CD8-positive, alpha-beta T cell (primary cell): ENCODE measurements at regions of chr10 and their contacts with region 1.

Region 1: DNA sequence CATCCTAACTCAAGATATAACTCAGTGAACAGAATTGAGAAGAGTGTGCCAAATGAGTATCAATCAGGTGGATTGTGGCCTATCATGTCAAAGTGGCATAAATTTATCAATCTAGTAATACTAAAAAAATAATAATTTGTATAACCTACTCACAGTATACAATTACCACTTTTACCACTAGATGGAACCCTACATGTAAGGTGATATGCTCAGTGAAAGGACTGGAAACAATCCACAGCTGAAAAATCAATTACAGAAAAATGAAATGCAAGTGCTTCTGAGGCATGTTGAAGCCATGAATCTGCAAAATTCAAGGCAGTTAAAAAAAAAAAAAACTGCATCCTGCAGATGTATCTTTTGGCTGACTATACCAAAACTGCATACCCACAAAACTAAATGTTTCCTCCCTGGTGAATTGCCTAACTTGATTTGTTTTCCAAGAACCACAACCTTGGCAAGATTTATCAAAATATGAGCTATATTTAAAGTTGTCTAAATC is 13.9 kb downstream of the ARHGAP19 start:
- DNase-seq: peak in 2 of 9 experiments; percentile 61 to 74
- ATAC-seq: peak; percentile 84
- H3K4me3 ChIP-seq: no peak overlapping the region
- H3K4me3 Mint-ChIP-seq: no peak overlapping the region
- H3K27ac ChIP-seq: no peak overlapping the region
- H3K27ac Mint-ChIP-seq: no peak overlapping the region
- H3K4me1 ChIP-seq: no peaks in the 10 kb centered on the region
- H3K4me1 Mint-ChIP-seq: peaks cover 5% of the 10 kb centered on the region
- H3K27me3 ChIP-seq: no peaks in the 10 kb centered on the region
- H3K27me3 Mint-ChIP-seq: no peaks in the 10 kb centered on the region
- CTCF ChIP-seq: peak; percentile 82

Region 2: DNA sequence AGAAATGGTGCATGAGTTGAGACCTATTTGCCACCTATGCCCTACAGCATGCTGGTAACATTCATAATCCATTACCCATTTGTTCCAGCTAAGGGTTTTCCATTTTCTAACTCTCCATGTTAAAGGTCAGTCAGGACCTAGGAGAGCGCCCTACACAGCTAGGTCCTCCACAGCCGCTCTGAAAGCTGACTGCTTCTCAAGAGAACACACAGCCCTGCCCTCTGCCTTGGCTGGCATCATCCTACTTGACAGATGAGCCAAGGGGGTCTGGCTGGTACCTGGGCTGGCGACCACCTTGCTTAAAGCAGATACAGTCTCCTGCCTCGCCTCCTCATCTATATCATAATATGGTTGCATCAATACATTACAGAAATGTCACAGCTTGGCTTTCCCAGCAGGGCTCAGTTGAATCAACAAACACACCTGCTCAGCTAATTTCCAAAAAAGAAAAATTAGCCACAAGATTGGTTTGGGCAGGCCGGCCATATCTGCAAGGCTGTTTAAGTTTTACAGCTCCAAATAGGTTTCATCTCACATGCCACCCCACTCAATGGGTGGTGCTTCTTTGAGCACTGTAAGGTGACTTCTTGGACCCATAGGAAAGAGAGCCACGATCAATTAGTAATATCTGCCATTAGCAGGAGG is 782.1 kb before region 1 on chr10:
- CTCF ChIA-PET with region 1: no interaction called
- POLR2A ChIA-PET with region 1: no interaction called
- intact Hi-C with region 1: no loop called
- DNase-seq: no peak
- ATAC-seq: no peak
- H3K4me3 ChIP-seq: no peak overlapping the region
- H3K4me3 Mint-ChIP-seq: no peak overlapping the region
- H3K27ac ChIP-seq: no peak overlapping the region
- H3K27ac Mint-ChIP-seq: no peak overlapping the region
- H3K4me1 ChIP-seq: no peaks in the 10 kb centered on the region
- H3K4me1 Mint-ChIP-seq: no peaks in the 10 kb centered on the region
- H3K27me3 ChIP-seq: no peaks in the 10 kb centered on the region
- H3K27me3 Mint-ChIP-seq: peaks cover 20% of the 10 kb centered on the region
- CTCF ChIP-seq: no peak

Region 3: DNA sequence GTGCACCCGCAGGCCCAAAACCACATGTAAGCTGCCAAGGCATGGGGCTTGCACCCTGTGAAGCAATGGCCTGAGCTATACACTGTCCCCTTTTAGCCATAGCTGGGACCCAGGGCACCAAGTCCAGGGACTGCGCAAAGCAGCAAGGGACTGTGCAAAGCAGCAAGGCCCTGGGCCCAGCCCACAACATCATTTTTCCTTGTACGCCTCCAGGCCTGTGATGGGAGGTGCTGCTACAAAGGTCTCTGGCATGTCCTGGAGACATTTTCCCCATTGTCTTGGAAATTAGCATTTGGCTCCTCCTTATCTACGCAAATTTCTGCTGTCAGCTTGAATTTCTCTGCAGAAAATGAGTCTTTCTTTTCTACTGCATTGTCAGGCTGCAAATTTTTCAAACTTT is 10.9 kb before region 1 on chr10:
- CTCF ChIA-PET with region 1: interaction called, 14 read pairs
- POLR2A ChIA-PET with region 1: interaction called, 3 read pairs
- intact Hi-C with region 1: no loop called
- DNase-seq: no peak
- ATAC-seq: no peak
- H3K4me3 ChIP-seq: no peak overlapping the region
- H3K4me3 Mint-ChIP-seq: no peak overlapping the region
- H3K27ac ChIP-seq: no peak overlapping the region
- H3K27ac Mint-ChIP-seq: no peak overlapping the region
- H3K4me1 ChIP-seq: no peaks in the 10 kb centered on the region
- H3K4me1 Mint-ChIP-seq: peaks cover 11% of the 10 kb centered on the region
- H3K27me3 ChIP-seq: no peaks in the 10 kb centered on the region
- H3K27me3 Mint-ChIP-seq: no peaks in the 10 kb centered on the region
- CTCF ChIP-seq: no peak

Region 4: DNA sequence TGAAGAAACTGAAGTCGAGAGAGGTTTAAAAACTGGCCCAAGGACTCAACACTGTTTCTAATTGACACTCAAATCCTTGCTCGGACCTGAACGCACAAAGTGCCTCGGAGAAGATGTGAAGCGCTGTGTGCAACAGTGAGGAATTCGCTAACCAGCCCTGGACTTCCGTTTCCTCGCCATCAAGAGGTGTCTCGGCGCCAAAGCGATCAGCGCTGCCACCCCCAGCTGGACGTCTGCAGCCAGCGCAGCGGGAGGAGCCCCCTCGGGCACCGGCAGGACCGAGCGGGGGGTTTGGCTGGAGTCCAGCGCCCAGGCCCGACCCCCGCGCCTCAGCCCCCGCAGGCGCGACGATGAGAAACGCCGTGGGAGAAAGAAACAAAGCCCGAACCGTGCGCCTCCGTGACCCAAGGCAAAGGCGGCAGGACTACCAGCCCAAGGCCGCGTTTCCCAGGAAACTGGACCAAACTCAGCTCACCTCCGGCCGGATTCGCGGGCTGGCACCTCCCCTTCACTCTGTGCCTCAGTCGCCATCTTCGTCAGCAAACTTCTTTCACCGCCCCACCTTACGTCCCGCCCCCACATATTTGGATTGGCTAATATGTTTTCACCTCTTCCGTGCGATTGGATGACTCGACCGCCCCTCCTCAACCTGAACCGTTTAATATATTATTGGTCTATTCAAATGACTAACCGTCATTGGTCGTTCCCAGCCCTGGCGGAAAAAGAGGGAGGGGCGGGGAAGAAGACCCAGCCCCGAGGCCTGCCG is 13.7 kb after region 1 on chr10 and contains the start of gene ARHGAP19:
- CTCF ChIA-PET with region 1: interaction called, 8 read pairs
- POLR2A ChIA-PET with region 1: interaction called, 3 read pairs
- intact Hi-C with region 1: loop called in 1 of 2 experiments (anchors 2 kb)
- DNase-seq: peak; percentile 86 to 98 (median 91)
- ATAC-seq: peak; percentile 99
- H3K4me3 ChIP-seq: peak within 1 kb of the TSS; percentile 82 to 93
- H3K4me3 Mint-ChIP-seq: peak within 1 kb of the TSS; percentile 94
- H3K27ac ChIP-seq: peak within 1 kb of the TSS; percentile 73 to 75
- H3K27ac Mint-ChIP-seq: peak within 1 kb of the TSS; percentile 86
- H3K4me1 ChIP-seq: peaks cover 6% of the 10 kb centered on the region
- H3K4me1 Mint-ChIP-seq: peaks cover 20% of the 10 kb centered on the region
- H3K27me3 ChIP-seq: no peaks in the 10 kb centered on the region
- H3K27me3 Mint-ChIP-seq: no peaks in the 10 kb centered on the region
- CTCF ChIP-seq: no peak
- total RNA-seq, gene ARHGAP19: 5.7 to 6.4 TPM

Region 5: DNA sequence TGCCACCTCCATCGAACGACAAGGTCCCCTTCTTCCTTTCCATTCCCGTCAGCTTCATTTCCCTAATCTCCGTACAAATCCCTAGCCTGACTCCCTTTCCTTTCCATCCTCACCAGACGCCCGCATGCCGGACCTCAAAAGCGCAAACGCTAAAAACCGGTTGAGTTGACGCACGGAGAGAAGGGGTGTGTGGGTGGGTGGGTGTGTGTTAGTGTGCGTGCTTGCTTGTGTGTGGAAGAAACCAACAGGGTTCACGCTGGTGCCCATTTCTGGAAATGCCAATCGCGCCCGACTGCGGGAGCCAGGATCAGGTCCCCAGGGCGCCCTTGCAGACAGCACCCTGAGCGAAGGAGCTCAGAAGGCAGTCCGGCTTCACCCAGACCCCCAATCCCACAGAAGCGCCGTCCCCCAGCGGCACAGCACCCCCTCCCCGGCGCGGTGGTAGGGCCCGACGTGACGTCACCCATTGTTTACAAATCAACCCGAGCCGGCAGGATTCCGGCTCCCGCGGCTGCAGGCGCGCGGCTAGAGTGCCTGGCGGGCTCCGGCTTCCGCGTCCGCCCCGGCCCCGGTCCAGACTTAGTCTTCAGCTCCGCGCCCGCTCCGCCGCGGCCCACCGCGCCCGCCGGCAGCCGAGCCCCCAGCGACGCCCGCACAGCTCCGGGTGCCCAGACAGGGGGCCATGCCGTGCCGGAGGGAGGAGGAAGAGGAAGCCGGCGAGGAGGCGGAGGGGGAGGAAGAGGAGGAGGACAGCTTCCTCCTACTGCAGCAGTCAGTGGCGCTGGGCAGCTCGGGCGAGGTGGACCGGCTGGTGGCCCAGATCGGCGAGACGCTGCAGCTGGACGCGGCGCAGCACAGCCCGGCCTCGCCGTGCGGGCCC is 40.5 kb after region 1 on chr10 and contains the start of gene FRAT1:
- CTCF ChIA-PET with region 1: interaction called, 10 read pairs
- POLR2A ChIA-PET with region 1: interaction called, 9 read pairs
- intact Hi-C with region 1: loop called in 1 of 2 experiments (anchors 2 kb)
- DNase-seq: peak; percentile 86 to 97 (median 92)
- ATAC-seq: peak; percentile 76
- H3K4me3 ChIP-seq: peak within 1 kb of the TSS; percentile 76 to 79
- H3K4me3 Mint-ChIP-seq: peak within 1 kb of the TSS; percentile 99
- H3K27ac ChIP-seq: peak within 1 kb of the TSS; percentile 100
- H3K27ac Mint-ChIP-seq: peak within 1 kb of the TSS; percentile 100
- H3K4me1 ChIP-seq: peaks cover 24% of the 10 kb centered on the region
- H3K4me1 Mint-ChIP-seq: peaks cover 29% of the 10 kb centered on the region
- H3K27me3 ChIP-seq: no peaks in the 10 kb centered on the region
- H3K27me3 Mint-ChIP-seq: no peaks in the 10 kb centered on the region
- CTCF ChIP-seq: no peak
- total RNA-seq, gene FRAT1: 39.6 to 40.2 TPM

Region 6: DNA sequence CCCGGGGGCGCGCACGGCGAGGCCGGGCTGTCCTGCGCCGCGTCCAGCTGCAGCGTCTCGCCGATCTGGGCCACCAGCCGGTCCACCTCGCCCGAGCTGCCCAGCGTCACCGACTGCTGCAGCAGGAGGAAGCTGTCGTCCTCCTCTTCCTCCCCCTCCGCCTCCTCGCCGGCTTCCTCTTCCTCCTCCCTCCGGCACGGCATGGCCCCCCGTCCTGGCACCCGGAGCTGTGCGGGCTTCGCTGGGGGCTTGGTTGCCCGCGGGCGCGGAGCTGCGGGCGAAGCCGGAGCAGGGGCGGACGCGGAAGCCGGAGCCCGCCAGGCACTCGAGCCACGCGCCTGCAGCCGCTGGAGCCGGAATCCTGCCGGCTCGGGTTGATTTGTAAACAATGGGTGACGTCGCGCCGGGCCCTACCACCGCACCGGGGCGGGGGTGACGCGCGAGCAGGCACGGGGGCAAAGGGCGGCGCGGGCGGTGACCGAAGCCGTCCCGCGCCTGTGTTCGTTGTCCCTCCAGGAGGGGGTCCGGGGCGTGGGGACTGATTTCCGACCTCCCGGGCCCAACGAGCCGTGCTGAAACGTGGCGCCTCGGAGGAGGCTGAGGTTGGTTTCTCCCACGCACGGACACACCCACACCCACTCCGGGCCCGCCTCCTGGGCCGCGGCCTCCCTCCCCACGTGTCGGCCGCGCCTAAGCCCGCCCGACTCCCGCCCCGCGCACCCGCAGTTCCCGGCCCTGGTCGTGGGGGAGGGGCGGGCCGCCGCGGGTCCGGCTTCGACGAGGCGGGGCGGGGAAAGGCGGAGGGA is 56.0 kb after region 1 on chr10 and contains the start of gene FRAT2:
- CTCF ChIA-PET with region 1: interaction called, 31 read pairs
- POLR2A ChIA-PET with region 1: interaction called, 5 read pairs
- intact Hi-C with region 1: loop called (anchors 2 kb)
- DNase-seq: peak; percentile 80 to 95 (median 87)
- ATAC-seq: peak; percentile 89
- H3K4me3 ChIP-seq: peak within 1 kb of the TSS; percentile 61 to 92
- H3K4me3 Mint-ChIP-seq: peak within 1 kb of the TSS; percentile 97
- H3K27ac ChIP-seq: peak within 1 kb of the TSS; percentile 99
- H3K27ac Mint-ChIP-seq: peak within 1 kb of the TSS; percentile 96
- H3K4me1 ChIP-seq: peaks cover 34% of the 10 kb centered on the region
- H3K4me1 Mint-ChIP-seq: peaks cover 39% of the 10 kb centered on the region
- H3K27me3 ChIP-seq: no peaks in the 10 kb centered on the region
- H3K27me3 Mint-ChIP-seq: no peaks in the 10 kb centered on the region
- CTCF ChIP-seq: no peak
- total RNA-seq, gene FRAT2: 20.8 to 22.3 TPM

Region 7: DNA sequence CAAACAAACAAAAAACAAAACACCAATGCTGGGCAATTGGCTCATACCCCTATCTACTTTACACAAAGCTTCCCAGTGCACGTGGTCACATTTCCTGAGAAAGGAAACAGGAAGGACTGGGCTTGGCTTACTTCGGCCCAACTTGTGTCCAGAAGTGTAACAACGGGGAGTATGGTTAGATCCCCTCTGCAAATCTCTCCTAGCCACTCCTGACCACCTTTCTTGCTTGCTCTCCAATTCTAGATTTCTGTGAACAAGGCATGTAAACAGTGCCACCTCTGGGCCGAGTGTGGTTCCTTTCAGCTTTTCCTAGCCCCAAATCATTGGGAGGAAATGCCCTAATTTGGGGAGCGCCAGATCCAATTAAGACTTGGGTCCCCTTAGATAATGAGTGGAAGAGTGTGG is 77.0 kb after region 1 on chr10:
- CTCF ChIA-PET with region 1: interaction called, 74 read pairs
- POLR2A ChIA-PET with region 1: no interaction called
- intact Hi-C with region 1: loop called (anchors 2 kb)
- DNase-seq: peak in 4 of 9 experiments; percentile 9 to 56 (median 30)
- ATAC-seq: peak; percentile 40
- H3K4me3 ChIP-seq: no peak overlapping the region
- H3K4me3 Mint-ChIP-seq: no peak overlapping the region
- H3K27ac ChIP-seq: no peak overlapping the region
- H3K27ac Mint-ChIP-seq: no peak overlapping the region
- H3K4me1 ChIP-seq: no peaks in the 10 kb centered on the region
- H3K4me1 Mint-ChIP-seq: no peaks in the 10 kb centered on the region
- H3K27me3 ChIP-seq: no peaks in the 10 kb centered on the region
- H3K27me3 Mint-ChIP-seq: no peaks in the 10 kb centered on the region
- CTCF ChIP-seq: peak; percentile 28

Region 8: GRCh38 chr10:97365761-97366351 is 87.3 kb after region 1 on chr10:
- CTCF ChIA-PET with region 1: interaction called, 13 read pairs
- POLR2A ChIA-PET with region 1: no interaction called
- intact Hi-C with region 1: no loop called
- DNase-seq: no peak
- ATAC-seq: no peak
- H3K4me3 ChIP-seq: no peak overlapping the region
- H3K4me3 Mint-ChIP-seq: no peak overlapping the region
- H3K27ac ChIP-seq: no peak overlapping the region
- H3K27ac Mint-ChIP-seq: no peak overlapping the region
- H3K4me1 ChIP-seq: no peaks in the 10 kb centered on the region
- H3K4me1 Mint-ChIP-seq: no peaks in the 10 kb centered on the region
- H3K27me3 ChIP-seq: no peaks in the 10 kb centered on the region
- H3K27me3 Mint-ChIP-seq: no peaks in the 10 kb centered on the region
- CTCF ChIP-seq: no peak